ENCODE measurements at regions of chr13 and their contacts with region 1.

Region 1: DNA sequence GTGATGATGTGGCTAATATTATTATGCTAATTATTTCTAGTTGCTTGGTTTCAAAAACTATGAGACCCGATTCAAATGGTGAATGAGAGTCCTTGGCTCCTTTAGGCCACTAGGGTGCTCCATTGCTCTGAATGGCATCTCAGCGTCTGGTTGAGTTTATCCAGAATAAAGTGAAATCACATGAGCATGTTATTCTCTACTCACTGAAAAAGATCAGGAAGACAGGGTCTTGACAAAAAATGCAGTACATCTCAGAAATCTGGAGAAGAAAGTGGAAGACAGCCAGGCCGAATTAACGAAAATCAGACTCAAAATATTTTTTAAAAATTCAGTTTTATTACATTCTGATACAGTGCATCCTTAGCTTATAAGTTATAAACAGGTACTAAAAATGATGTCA is 516.2 kb downstream of the MYO16 start:
- DNase-seq: no peak
- ATAC-seq: peak; percentile 76

Region 2: DNA sequence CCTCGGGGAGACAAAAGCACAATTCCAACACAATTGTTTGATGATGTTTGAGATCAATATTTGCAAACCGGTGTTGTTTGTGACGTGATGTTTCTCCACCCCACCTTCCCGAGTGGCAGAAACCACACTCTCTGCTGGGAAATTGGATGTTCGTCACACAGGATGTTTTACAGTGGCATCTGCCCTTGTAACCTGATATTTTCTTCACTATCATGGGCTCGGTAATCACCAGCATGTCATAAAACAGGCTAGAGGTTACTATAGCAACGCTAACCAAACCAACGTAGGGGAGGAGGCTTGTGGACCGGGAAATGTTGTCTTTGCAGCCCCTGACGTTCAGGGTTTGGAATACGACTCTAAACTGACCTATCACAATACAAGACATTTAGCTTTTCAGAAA is 186.3 kb after region 1 on chr13:
- intact Hi-C with region 1: loop called (anchors 2 kb)
- DNase-seq: no peak
- ATAC-seq: no peak